Endothelial cell of umbilical vein (primary cell): ENCODE measurements at regions of chr3 and their contacts with region 1.

Region 1: GRCh38 chr3:81242871-81243270 is 518.6 kb downstream of the GBE1 start:
- DNase-seq: peak; percentile 64
- H3K4me3 ChIP-seq: no peak overlapping the region
- H3K27ac ChIP-seq: no peak overlapping the region
- H3K4me1 ChIP-seq: no peaks in the 10 kb centered on the region
- H3K27me3 ChIP-seq: no peaks in the 10 kb centered on the region
- CTCF ChIP-seq: peak; percentile 29 to 42
- POLR2A ChIP-seq: no peak

Region 2: DNA sequence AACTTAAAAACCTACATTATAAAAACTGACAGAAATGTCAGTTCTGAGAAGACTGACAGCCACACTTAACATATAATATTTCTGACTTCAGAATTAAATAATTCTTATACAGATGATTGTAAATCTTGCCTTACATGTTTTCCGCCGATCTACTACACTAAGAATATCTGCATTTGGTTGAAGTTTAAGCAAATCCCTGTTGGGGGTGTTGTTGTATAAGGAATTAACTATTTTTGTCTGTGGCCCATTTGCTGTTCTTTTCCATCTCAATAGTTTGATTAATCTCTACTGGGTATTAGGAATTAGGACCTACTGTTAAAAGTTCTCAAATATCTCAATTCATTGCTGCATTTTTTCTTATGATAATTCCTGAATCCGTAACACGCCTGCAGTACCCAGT is 636.8 kb before region 1 on chr3:
- CTCF ChIA-PET with region 1: interaction called, 7 read pairs
- POLR2A ChIA-PET with region 1: no interaction called
- dilution Hi-C with region 1: no loop called
- intact Hi-C with region 1: loop called (anchors 10 kb)
- DNase-seq: peak; percentile 6
- H3K4me3 ChIP-seq: no peak overlapping the region
- H3K27ac ChIP-seq: no peak overlapping the region
- H3K4me1 ChIP-seq: no peaks in the 10 kb centered on the region
- H3K27me3 ChIP-seq: no peaks in the 10 kb centered on the region
- CTCF ChIP-seq: no peak
- POLR2A ChIP-seq: no peak

Region 3: DNA sequence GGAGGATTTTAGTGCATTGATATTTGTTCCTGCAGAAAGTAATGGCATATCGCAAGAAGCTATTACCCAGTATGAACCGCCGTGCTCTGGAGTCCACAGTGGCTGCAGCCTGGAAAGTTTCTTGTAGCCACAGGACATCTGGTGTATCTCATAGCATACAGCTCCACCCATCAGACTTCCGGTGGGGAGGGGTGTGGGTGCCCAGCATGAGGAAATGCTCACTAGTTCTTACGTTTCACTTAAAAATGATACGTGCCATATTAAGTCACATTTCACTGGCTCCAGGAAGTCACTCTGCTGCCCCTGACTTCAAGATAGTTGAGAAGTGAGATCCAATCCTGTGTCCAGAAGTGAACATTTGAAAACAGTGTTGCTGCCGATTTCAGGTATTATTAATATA is 471.8 kb before region 1 on chr3:
- CTCF ChIA-PET with region 1: interaction called, 68 read pairs
- POLR2A ChIA-PET with region 1: no interaction called
- dilution Hi-C with region 1: no loop called
- intact Hi-C with region 1: loop called (anchors 1 kb)
- DNase-seq: no peak
- H3K4me3 ChIP-seq: no peak overlapping the region
- H3K27ac ChIP-seq: no peak overlapping the region
- H3K4me1 ChIP-seq: no peaks in the 10 kb centered on the region
- H3K27me3 ChIP-seq: no peaks in the 10 kb centered on the region
- CTCF ChIP-seq: no peak
- POLR2A ChIP-seq: no peak

Region 4: GRCh38 chr3:80785470-80785869 is 457.4 kb before region 1 on chr3:
- CTCF ChIA-PET with region 1: interaction called, 61 read pairs
- POLR2A ChIA-PET with region 1: no interaction called
- dilution Hi-C with region 1: no loop called
- intact Hi-C with region 1: loop called (anchors 1 kb)
- DNase-seq: peak; percentile 57
- H3K4me3 ChIP-seq: no peak overlapping the region
- H3K27ac ChIP-seq: no peak overlapping the region
- H3K4me1 ChIP-seq: no peaks in the 10 kb centered on the region
- H3K27me3 ChIP-seq: no peaks in the 10 kb centered on the region
- CTCF ChIP-seq: peak; percentile 31 to 32
- POLR2A ChIP-seq: no peak

Region 5: DNA sequence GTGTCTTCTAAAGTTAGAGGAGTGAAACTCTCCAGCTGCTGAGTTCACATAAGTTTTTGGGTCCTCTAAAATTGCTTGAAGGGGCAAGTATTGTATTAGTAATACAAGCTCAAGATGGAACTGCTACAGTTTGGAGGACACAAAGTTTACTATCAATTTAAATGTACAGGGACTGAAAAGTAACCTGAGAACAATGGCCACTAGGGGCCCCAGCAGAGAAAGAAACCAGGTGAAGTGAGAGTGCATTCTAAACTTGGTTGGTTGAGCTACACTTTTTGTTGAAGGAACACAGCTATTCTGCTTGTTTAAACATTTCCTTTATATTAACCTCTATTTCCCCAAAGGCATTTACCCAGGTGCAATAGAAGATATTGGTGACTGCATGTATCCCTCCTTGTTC is 236.9 kb before region 1 on chr3:
- CTCF ChIA-PET with region 1: interaction called, 10 read pairs
- POLR2A ChIA-PET with region 1: no interaction called
- dilution Hi-C with region 1: no loop called
- intact Hi-C with region 1: no loop called
- DNase-seq: no peak
- H3K4me3 ChIP-seq: no peak overlapping the region
- H3K27ac ChIP-seq: no peak overlapping the region
- H3K4me1 ChIP-seq: no peaks in the 10 kb centered on the region
- H3K27me3 ChIP-seq: no peaks in the 10 kb centered on the region
- CTCF ChIP-seq: no peak
- POLR2A ChIP-seq: no peak

Region 6: GRCh38 chr3:81218023-81218422 is 24.8 kb before region 1 on chr3:
- CTCF ChIA-PET with region 1: interaction called, 24 read pairs
- POLR2A ChIA-PET with region 1: no interaction called
- dilution Hi-C with region 1: no loop called
- intact Hi-C with region 1: no loop called
- DNase-seq: peak; percentile 41
- H3K4me3 ChIP-seq: no peak overlapping the region
- H3K27ac ChIP-seq: no peak overlapping the region
- H3K4me1 ChIP-seq: peaks cover 11% of the 10 kb centered on the region
- H3K27me3 ChIP-seq: no peaks in the 10 kb centered on the region
- CTCF ChIP-seq: peak in 1 of 2 donors; percentile 26
- POLR2A ChIP-seq: no peak

Region 7: GRCh38 chr3:81308306-81308705 is 65.4 kb after region 1 on chr3:
- CTCF ChIA-PET with region 1: no interaction called
- POLR2A ChIA-PET with region 1: no interaction called
- dilution Hi-C with region 1: no loop called
- intact Hi-C with region 1: no loop called
- DNase-seq: peak; percentile 51
- H3K4me3 ChIP-seq: no peak overlapping the region
- H3K27ac ChIP-seq: peak overlapping the region; percentile 93
- H3K4me1 ChIP-seq: peaks cover 16% of the 10 kb centered on the region
- H3K27me3 ChIP-seq: no peaks in the 10 kb centered on the region
- CTCF ChIP-seq: no peak
- POLR2A ChIP-seq: no peak